ENCODE measurements at regions of chr1 and their contacts with region 1.

Region 1: DNA sequence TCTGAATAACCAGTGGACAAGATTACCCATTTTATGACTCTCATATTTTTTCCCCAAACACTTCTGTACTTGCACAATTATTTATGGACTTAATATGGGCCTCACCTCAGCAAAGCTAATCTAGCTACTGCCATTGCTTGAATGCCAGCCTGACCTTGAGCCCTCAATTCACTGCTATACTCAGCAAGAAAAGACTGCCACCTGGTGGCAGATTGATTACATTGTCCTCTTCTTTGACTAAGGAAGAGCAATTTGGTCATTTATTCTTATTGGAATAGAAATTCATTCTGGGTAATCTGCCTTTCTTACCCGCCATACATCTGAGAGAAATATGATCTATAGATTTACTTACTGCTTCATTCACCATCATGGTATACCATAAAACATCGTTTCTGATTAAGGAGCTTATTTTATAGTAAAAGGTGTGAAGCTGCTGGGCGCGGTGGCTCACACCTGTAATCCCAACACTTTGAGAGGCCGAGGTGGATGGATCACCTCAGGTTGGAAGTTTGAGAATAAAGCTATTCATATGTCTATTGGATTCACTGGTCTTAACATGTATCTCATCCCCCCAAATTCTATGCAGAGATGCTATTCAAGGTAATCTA is 32.9 kb upstream of the DIPK1A start:
- DNase-seq: peak in 5 of 10 donors; percentile 46 to 85 (median 69)
- H3K4me3 ChIP-seq: peak overlapping the region in 1 of 59 donors; percentile 8
- H3K27ac ChIP-seq: peak overlapping the region in 4 of 59 donors; percentile 35 to 58 (median 40)
- H3K27me3 ChIP-seq: no peaks in the 10 kb centered on the region
- CTCF ChIP-seq: peak; percentile 88 to 100 (median 94)

Region 2: GRCh38 chr1:92754000-92754718 is 240.1 kb before region 1 on chr1:
- intact Hi-C with region 1: loop called in 1 of 2 experiments (anchors 10 kb)
- DNase-seq: no peak
- H3K4me3 ChIP-seq: no peak overlapping the region
- H3K27ac ChIP-seq: peak overlapping the region in 20 of 59 donors; percentile 2 to 80 (median 47)
- H3K27me3 ChIP-seq: no peaks in the 10 kb centered on the region
- CTCF ChIP-seq: peak in 1 of 56 donors; percentile 15

Region 3: GRCh38 chr1:92909321-92909720 is 84.9 kb before region 1 on chr1:
- intact Hi-C with region 1: no loop called
- DNase-seq: peak in 6 of 10 donors; percentile 21 to 63 (median 36)
- H3K4me3 ChIP-seq: no peak overlapping the region
- H3K27ac ChIP-seq: peak overlapping the region in 32 of 59 donors; percentile 0 to 61 (median 29)
- H3K27me3 ChIP-seq: no peaks in the 10 kb centered on the region
- CTCF ChIP-seq: no peak

Region 4: GRCh38 chr1:92960395-92961130 is 33.6 kb before region 1 on chr1:
- intact Hi-C with region 1: loop called (anchors 2 to 5 kb)
- DNase-seq: peak in 9 of 10 donors; percentile 70 to 80 (median 78)
- H3K4me3 ChIP-seq: peak overlapping the region; percentile 64 to 98 (median 88)
- H3K27ac ChIP-seq: peak overlapping the region; percentile 91 to 99 (median 98)
- H3K27me3 ChIP-seq: no peaks in the 10 kb centered on the region
- CTCF ChIP-seq: peak; percentile 54 to 89 (median 79)